Heart right ventricle (tissue), 16 donors: ENCODE measurements at regions of chr1 and their contacts with region 1.

Region 1: GRCh38 chr1:202462342-202463076 is 114.0 kb downstream of the PPP1R12B start:
- DNase-seq: peak in 1 of 2 donors; percentile 57
- ATAC-seq: peak; percentile 25 to 83 (median 56)
- H3K4me3 ChIP-seq: peak overlapping the region; percentile 1 to 52 (median 41)
- H3K27ac ChIP-seq: peak overlapping the region; percentile 52 to 89 (median 82)
- H3K4me1 ChIP-seq: peaks cover 0 to 57% (median 26%) of the 10 kb centered on the region in 9 donors
- H3K27me3 ChIP-seq: peaks cover 0 to 25% (median 0%) of the 10 kb centered on the region in 7 donors
- CTCF ChIP-seq: no peak

Region 2: GRCh38 chr1:202365092-202365815 is 97.3 kb before region 1 on chr1:
- intact Hi-C with region 1: no loop called
- DNase-seq: no peak
- ATAC-seq: peak in 2 of 8 donors; percentile 34 to 53
- H3K4me3 ChIP-seq: no peak overlapping the region
- H3K27ac ChIP-seq: peak overlapping the region in 1 of 10 donors; percentile 3
- H3K4me1 ChIP-seq: peaks cover 0 to 40% (median 21%) of the 10 kb centered on the region in 9 donors
- H3K27me3 ChIP-seq: no peaks in the 10 kb centered on the region
- CTCF ChIP-seq: no peak

Region 3: GRCh38 chr1:202599677-202600431 is 137.3 kb after region 1 on chr1:
- intact Hi-C with region 1: loop called in 1 of 10 experiments (anchors 10 kb)
- DNase-seq: peak; percentile 51 to 57
- ATAC-seq: peak; percentile 73 to 91 (median 82)
- H3K4me3 ChIP-seq: no peak overlapping the region
- H3K27ac ChIP-seq: peak overlapping the region in 4 of 10 donors; percentile 6 to 53 (median 27)
- H3K4me1 ChIP-seq: peaks cover 0 to 9% (median 6%) of the 10 kb centered on the region in 9 donors
- H3K27me3 ChIP-seq: peaks cover 0 to 80% (median 0%) of the 10 kb centered on the region in 7 donors
- CTCF ChIP-seq: peak; percentile 47 to 82 (median 75)

Region 4: GRCh38 chr1:202625416-202626360 is 163.2 kb after region 1 on chr1:
- intact Hi-C with region 1: loop called in 1 of 10 experiments (anchors 10 kb)
- DNase-seq: peak; percentile 63 to 79
- ATAC-seq: peak; percentile 71 to 87 (median 80)
- H3K4me3 ChIP-seq: no peak overlapping the region
- H3K27ac ChIP-seq: peak overlapping the region in 1 of 10 donors; percentile 30
- H3K4me1 ChIP-seq: peaks cover 2 to 38% (median 29%) of the 10 kb centered on the region in 9 donors
- H3K27me3 ChIP-seq: peaks cover 0 to 70% (median 2%) of the 10 kb centered on the region in 7 donors
- CTCF ChIP-seq: peak; percentile 53 to 83 (median 72)

Region 5: DNA sequence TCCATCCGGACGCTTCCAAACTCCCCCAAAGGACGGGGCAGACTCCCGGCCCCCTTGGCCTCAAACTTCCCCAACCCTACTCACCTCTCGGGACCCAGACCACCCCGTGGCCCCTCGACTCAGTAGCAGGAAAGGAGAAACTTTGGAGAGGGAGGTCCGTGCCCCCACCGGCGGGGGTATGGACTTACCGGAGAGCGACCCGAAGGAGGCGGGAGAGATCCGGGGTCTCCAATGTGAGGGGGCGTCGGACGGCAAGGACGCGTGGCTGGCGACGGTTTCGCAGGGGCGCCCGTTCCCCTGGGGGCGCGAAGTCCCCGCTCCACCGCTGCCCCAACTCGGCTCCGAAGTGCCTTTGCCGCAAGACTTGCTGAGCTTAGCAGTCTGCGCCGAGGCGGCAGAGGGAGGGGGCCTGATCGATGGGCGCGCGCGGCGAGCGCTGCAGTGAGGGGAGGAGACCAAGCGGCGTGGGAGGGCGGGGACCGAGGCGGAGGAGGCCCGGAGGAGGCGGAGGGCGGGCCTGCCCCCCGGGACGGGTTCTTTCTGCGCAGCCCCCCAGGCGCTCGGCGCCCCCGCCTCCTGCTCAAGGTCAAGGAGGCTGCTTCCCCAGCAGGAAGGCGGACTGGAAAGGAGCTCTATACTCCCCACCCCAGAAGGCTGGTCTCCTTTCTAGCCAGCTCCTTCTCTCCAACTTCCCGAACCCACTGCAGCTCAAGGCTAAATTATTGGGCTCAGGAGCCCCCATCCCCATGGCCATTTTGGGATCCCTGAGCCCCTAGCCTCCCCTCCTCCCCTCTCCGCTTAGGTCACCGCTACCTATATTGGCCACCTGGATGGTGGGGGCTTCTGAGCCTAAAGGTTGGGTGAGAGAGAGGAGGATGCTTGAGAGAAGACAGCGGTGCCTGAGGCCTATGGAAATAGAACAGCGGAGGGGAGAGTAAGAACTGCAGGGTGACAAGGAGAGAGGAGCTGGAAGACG is 247.8 kb after region 1 on chr1 and contains the start of gene SYT2:
- intact Hi-C with region 1: loop called in 6 of 10 experiments (anchors 10 kb)
- DNase-seq: no peak
- ATAC-seq: peak in 6 of 8 donors; percentile 30 to 65 (median 50)
- H3K4me3 ChIP-seq: peak within 1 kb of the TSS; percentile 11 to 45 (median 34)
- H3K27ac ChIP-seq: no peak within 1 kb of the TSS
- H3K4me1 ChIP-seq: peaks cover 0 to 19% (median 15%) of the 10 kb centered on the region in 9 donors
- H3K27me3 ChIP-seq: peaks cover 7 to 98% (median 65%) of the 10 kb centered on the region in 7 donors
- CTCF ChIP-seq: no peak
- total RNA-seq, gene SYT2: 0.02 TPM in 1 of 10 donors, not detected in the others

Region 6: GRCh38 chr1:202728951-202729350 is 266.4 kb after region 1 on chr1:
- intact Hi-C with region 1: loop called in 1 of 10 experiments (anchors 10 kb)
- DNase-seq: no peak
- ATAC-seq: no peak
- H3K4me3 ChIP-seq: no peak overlapping the region
- H3K27ac ChIP-seq: no peak overlapping the region
- H3K4me1 ChIP-seq: no peaks in the 10 kb centered on the region
- H3K27me3 ChIP-seq: no peaks in the 10 kb centered on the region
- CTCF ChIP-seq: no peak